Caco-2 (cell line): ENCODE measurements at regions of chr7 and their contacts with region 1.

Region 1: GRCh38 chr7:98280791-98281756 is at the start of gene BRI3:
- DNase-seq: peak; percentile 89 to 94
- H3K4me3 ChIP-seq: peak within 1 kb of the TSS; percentile 81
- H3K4me3 Mint-ChIP-seq: peak within 1 kb of the TSS; percentile 97
- H3K27ac Mint-ChIP-seq: peak within 1 kb of the TSS; percentile 91
- H3K4me1 ChIP-seq: peaks cover 44% of the 10 kb centered on the region
- H3K4me1 Mint-ChIP-seq: peaks cover 43% of the 10 kb centered on the region
- H3K27me3 ChIP-seq: no peaks in the 10 kb centered on the region
- H3K27me3 Mint-ChIP-seq: no peaks in the 10 kb centered on the region
- CTCF ChIP-seq: no peak
- total RNA-seq, gene BRI3: 197 and 224 TPM in 2 replicates

Region 2: GRCh38 chr7:98034081-98035035 is 246.7 kb before region 1 on chr7:
- CTCF ChIA-PET with region 1: no interaction called
- POLR2A ChIA-PET with region 1: no interaction called
- intact Hi-C with region 1: no loop called
- DNase-seq: no peak
- H3K4me3 ChIP-seq: no peak overlapping the region
- H3K4me3 Mint-ChIP-seq: no peak overlapping the region
- H3K27ac Mint-ChIP-seq: no peak overlapping the region
- H3K4me1 ChIP-seq: no peaks in the 10 kb centered on the region
- H3K4me1 Mint-ChIP-seq: no peaks in the 10 kb centered on the region
- H3K27me3 ChIP-seq: no peaks in the 10 kb centered on the region
- H3K27me3 Mint-ChIP-seq: peaks cover 6% of the 10 kb centered on the region
- CTCF ChIP-seq: no peak

Region 3: GRCh38 chr7:98051118-98051744 is 229.8 kb before region 1 on chr7:
- CTCF ChIA-PET with region 1: no interaction called
- POLR2A ChIA-PET with region 1: no interaction called
- intact Hi-C with region 1: no loop called
- DNase-seq: peak; percentile 78
- H3K4me3 ChIP-seq: no peak overlapping the region
- H3K4me3 Mint-ChIP-seq: no peak overlapping the region
- H3K27ac Mint-ChIP-seq: no peak overlapping the region
- H3K4me1 ChIP-seq: peaks cover 13% of the 10 kb centered on the region; the same call in 1 of the 2 replicates
- H3K4me1 Mint-ChIP-seq: no peaks in the 10 kb centered on the region
- H3K27me3 ChIP-seq: no peaks in the 10 kb centered on the region
- H3K27me3 Mint-ChIP-seq: no peaks in the 10 kb centered on the region
- CTCF ChIP-seq: peak in 1 of 2 experiments; percentile 18

Region 4: DNA sequence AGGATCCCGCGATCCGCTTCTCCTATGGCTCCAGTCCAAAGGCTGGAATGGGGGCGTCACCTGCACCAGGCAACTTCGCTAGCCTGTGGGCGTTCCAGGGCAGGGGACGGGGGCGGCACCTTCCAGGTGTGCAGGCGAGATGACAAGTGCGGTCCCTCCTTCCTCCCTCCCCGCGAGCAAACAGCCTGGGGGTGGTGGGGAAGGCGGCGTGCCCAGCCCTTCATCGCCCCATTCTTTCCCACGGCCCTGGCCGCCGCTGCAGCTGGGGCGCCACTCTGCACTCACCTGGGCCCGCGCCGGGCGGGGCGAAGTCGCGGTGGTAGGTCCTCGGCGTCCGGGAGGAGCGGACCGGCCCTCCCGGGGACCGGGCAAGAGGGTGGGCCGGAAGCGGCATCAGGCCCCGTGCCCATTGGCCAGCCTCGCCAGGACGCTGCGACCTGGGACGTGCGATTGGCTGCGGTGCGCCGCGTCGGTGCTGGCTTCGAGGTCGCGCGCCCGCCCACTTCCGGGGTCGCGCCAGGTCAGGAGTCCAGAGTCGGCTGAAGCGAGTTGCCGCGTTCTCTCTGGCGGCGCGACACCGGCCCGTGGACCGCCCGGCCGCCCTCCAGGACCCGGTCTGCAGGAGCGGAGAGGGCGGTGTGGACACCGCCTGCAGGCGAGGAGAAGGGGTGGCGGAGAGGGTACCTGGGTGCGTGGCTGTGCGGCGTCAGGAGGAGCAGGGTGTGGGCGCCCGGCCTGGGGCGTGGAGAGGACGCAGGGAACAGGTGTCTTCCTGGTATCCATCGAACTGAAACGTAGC is 29.0 kb before region 1 on chr7 and contains the start of gene TECPR1:
- CTCF ChIA-PET with region 1: no interaction called
- POLR2A ChIA-PET with region 1: no interaction called
- intact Hi-C with region 1: loop called (anchors 1 kb)
- DNase-seq: peak; percentile 96 to 98
- H3K4me3 ChIP-seq: peak within 1 kb of the TSS; percentile 68
- H3K4me3 Mint-ChIP-seq: peak within 1 kb of the TSS; percentile 91
- H3K27ac Mint-ChIP-seq: peak within 1 kb of the TSS; percentile 85
- H3K4me1 ChIP-seq: peaks cover 8% of the 10 kb centered on the region; the same call in 1 of the 2 replicates
- H3K4me1 Mint-ChIP-seq: peaks cover 9% of the 10 kb centered on the region
- H3K27me3 ChIP-seq: no peaks in the 10 kb centered on the region
- H3K27me3 Mint-ChIP-seq: no peaks in the 10 kb centered on the region
- CTCF ChIP-seq: no peak
- total RNA-seq, gene TECPR1: 19.0 and 26.4 TPM in 2 replicates

Region 5: GRCh38 chr7:98420966-98421612 is 140.0 kb after region 1 on chr7:
- CTCF ChIA-PET with region 1: no interaction called
- POLR2A ChIA-PET with region 1: no interaction called
- intact Hi-C with region 1: no loop called
- DNase-seq: peak; percentile 85 to 86
- H3K4me3 ChIP-seq: no peak overlapping the region
- H3K4me3 Mint-ChIP-seq: no peak overlapping the region
- H3K27ac Mint-ChIP-seq: no peak overlapping the region
- H3K4me1 ChIP-seq: peaks cover 38% of the 10 kb centered on the region
- H3K4me1 Mint-ChIP-seq: peaks cover 23% of the 10 kb centered on the region
- H3K27me3 ChIP-seq: no peaks in the 10 kb centered on the region
- H3K27me3 Mint-ChIP-seq: no peaks in the 10 kb centered on the region
- CTCF ChIP-seq: peak; percentile 89 to 92